IMR-90 (cell line): ENCODE measurements at regions of chr3 and their contacts with region 1.

Region 1: GRCh38 chr3:86702381-86702958 is 288.5 kb downstream of the VGLL3 start:
- DNase-seq: peak; percentile 1
- ATAC-seq: peak; percentile 51
- H3K4me3 ChIP-seq: no peak overlapping the region
- H3K27ac ChIP-seq: no peak overlapping the region
- H3K4me1 ChIP-seq: no peaks in the 10 kb centered on the region
- H3K27me3 ChIP-seq: no peaks in the 10 kb centered on the region
- CTCF ChIP-seq: peak; percentile 58
- POLR2A ChIP-seq: no peak
- RAD21 ChIP-seq: peak; percentile 44

Region 2: GRCh38 chr3:87088993-87089841 is 386.7 kb after region 1 on chr3:
- CTCF ChIA-PET with region 1: no interaction called
- POLR2A ChIA-PET with region 1: no interaction called
- dilution Hi-C with region 1: no loop called
- in situ Hi-C with region 1: no loop called
- intact Hi-C with region 1: loop called (anchors 5 kb)
- DNase-seq: peak; percentile 71
- ATAC-seq: peak; percentile 90
- H3K4me3 ChIP-seq: peak overlapping the region; percentile 45
- H3K27ac ChIP-seq: peak overlapping the region; percentile 81
- H3K4me1 ChIP-seq: peaks cover 2% of the 10 kb centered on the region; the same call in 1 of the 2 replicates
- H3K27me3 ChIP-seq: no peaks in the 10 kb centered on the region
- CTCF ChIP-seq: no peak
- POLR2A ChIP-seq: no peak
- RAD21 ChIP-seq: no peak

Region 3: DNA sequence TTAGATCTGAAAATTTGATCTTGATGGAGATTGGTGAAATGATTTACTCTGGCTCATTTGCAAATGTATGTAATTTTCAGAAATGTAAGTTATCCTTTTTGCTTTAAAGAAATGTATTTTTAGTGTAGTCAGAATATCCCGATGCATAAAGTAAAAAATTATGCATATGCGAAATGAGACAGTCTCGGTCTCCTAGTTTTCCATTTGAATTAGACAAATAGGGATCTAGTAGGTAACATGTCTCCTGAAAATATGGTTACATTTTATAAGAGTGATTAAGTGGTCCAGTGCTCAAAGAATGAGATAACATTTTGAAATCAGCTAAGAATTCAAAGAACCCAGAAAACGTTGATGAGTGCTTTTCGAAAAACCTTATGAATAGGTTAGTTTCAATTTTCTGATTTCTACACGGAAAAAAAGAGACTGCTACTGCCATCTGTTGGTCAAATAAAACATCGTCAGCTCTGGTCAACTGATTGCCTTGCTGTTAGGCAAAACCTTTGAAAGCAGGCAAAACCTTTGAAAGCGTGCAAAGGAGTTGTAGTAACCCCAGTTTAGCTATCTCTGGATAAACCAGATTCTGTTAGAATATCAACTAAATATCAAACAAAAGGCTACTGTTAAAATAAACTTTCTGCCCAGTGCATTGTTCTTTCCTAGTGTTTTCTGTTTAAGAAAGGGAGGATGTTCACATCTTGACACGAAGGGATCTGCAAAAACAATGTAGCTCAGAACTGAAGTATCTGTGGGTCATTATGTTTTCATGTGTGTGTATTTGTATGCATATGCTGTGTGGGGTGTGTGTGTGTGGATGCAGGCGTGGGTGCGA is 465.4 kb after region 1 on chr3:
- CTCF ChIA-PET with region 1: interaction called, 4 read pairs
- POLR2A ChIA-PET with region 1: no interaction called
- dilution Hi-C with region 1: no loop called
- in situ Hi-C with region 1: no loop called
- intact Hi-C with region 1: loop called (anchors 5 kb)
- DNase-seq: peak; percentile 20
- ATAC-seq: peak; percentile 51
- H3K4me3 ChIP-seq: no peak overlapping the region
- H3K27ac ChIP-seq: no peak overlapping the region
- H3K4me1 ChIP-seq: no peaks in the 10 kb centered on the region
- H3K27me3 ChIP-seq: no peaks in the 10 kb centered on the region
- CTCF ChIP-seq: peak; percentile 52
- POLR2A ChIP-seq: no peak
- RAD21 ChIP-seq: peak; percentile 44